ENCODE measurements at regions of chr14 and their contacts with region 1.

Region 1: DNA sequence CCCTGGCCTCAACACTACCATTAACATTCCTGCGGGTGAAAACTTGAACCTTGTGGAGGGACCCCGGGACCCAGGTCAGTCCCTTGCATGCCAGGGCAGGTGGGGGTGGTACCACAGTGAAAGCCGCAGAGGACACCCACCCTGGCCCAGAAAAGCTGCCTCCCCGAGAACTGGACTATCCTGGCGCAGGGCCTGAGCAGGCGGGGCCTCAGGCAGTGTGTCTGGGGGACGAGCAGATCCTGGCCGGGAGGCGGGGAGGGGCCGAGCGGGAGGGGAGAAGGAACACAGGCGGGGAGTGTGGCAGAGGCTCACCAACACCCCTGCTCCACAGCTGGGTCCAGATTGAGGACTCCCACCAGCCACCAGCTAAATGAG is 10.0 kb downstream of the AHNAK2 start:
- DNase-seq: no peak
- ATAC-seq: peak; percentile 46
- H3K4me3 ChIP-seq: peak overlapping the region; percentile 65 to 77
- H3K27ac ChIP-seq: peak overlapping the region; percentile 93
- H3K4me1 ChIP-seq: peaks cover 50% of the 10 kb centered on the region
- H3K27me3 ChIP-seq: no peaks in the 10 kb centered on the region
- CTCF ChIP-seq: no peak

Region 2: GRCh38 chr14:104895786-104896661 is 72.1 kb before region 1 on chr14:
- CTCF ChIA-PET with region 1: interaction called, 3 read pairs
- POLR2A ChIA-PET with region 1: no interaction called
- in situ Hi-C with region 1: no loop called
- intact Hi-C with region 1: loop called (anchors 5 kb)
- DNase-seq: no peak
- ATAC-seq: peak; percentile 40
- H3K4me3 ChIP-seq: no peak overlapping the region
- H3K27ac ChIP-seq: no peak overlapping the region
- H3K4me1 ChIP-seq: peaks cover 3% of the 10 kb centered on the region
- H3K27me3 ChIP-seq: no peaks in the 10 kb centered on the region
- CTCF ChIP-seq: no peak

Measured in Panc1 (cell line).